HepG2 (cell line): ENCODE measurements at regions of chr3 and their contacts with region 1.

Region 1: GRCh38 chr3:168870872-168871271 is 775.1 kb upstream of the GOLIM4 start:
- DNase-seq: peak; percentile 93
- ATAC-seq: peak; percentile 90
- H3K4me3 ChIP-seq: no peak overlapping the region; a peak in 1 of 6 replicates
- H3K27ac ChIP-seq: peak overlapping the region; percentile 62
- H3K4me1 ChIP-seq: peaks cover 78% of the 10 kb centered on the region
- H3K27me3 ChIP-seq: no peaks in the 10 kb centered on the region
- CTCF ChIP-seq: no peak
- EP300 ChIP-seq: peak; percentile 47 to 92; a peak in 2 of 4 replicates
- POLR2A ChIP-seq: no peak
- RAD21 ChIP-seq: no peak

Region 2: GRCh38 chr3:168859143-168859542 is 11.7 kb before region 1 on chr3:
- CTCF ChIA-PET with region 1: no interaction called
- POLR2A ChIA-PET with region 1: interaction called, 15 read pairs
- in situ Hi-C with region 1: no loop called
- intact Hi-C with region 1: loop called (anchors 1 kb)
- DNase-seq: peak; percentile 91
- ATAC-seq: peak; percentile 97
- H3K4me3 ChIP-seq: no peak overlapping the region
- H3K27ac ChIP-seq: peak overlapping the region; percentile 90
- H3K4me1 ChIP-seq: peaks cover 69% of the 10 kb centered on the region
- H3K27me3 ChIP-seq: no peaks in the 10 kb centered on the region
- CTCF ChIP-seq: no peak
- EP300 ChIP-seq: peak in 1 of 2 experiments; percentile 98; a peak in 2 of 4 replicates
- POLR2A ChIP-seq: no peak
- RAD21 ChIP-seq: no peak

Region 3: GRCh38 chr3:168884353-168884903 is 13.6 kb after region 1 on chr3:
- CTCF ChIA-PET with region 1: no interaction called
- POLR2A ChIA-PET with region 1: no interaction called
- in situ Hi-C with region 1: no loop called
- intact Hi-C with region 1: loop called (anchors 2 kb)
- DNase-seq: no peak
- ATAC-seq: no peak
- H3K4me3 ChIP-seq: no peak overlapping the region
- H3K27ac ChIP-seq: no peak overlapping the region
- H3K4me1 ChIP-seq: peaks cover 20% of the 10 kb centered on the region
- H3K27me3 ChIP-seq: no peaks in the 10 kb centered on the region; a peak in 1 of 5 replicates
- CTCF ChIP-seq: no peak
- EP300 ChIP-seq: no peak
- POLR2A ChIP-seq: no peak
- RAD21 ChIP-seq: no peak

Region 4: DNA sequence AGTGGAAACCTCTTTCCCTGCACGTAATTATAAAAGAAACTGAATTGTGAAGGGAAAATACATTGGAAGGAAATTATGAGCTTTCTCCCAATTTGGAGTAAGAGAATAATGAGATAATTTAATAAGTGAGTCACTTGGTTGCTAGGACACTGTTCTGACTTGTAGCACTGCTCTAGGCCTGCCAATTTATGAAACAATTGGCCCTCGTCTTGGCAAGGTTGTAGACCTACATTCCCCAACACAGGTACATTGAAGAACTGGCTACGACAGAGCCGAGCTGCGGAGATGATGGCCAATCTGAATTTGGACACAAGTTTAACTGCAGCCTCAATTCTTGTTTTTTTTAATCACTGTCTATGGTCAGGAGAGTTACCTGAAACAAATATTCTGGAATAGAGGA is 118.5 kb after region 1 on chr3:
- CTCF ChIA-PET with region 1: no interaction called
- POLR2A ChIA-PET with region 1: no interaction called
- in situ Hi-C with region 1: no loop called
- intact Hi-C with region 1: loop called (anchors 5 kb)
- DNase-seq: no peak
- ATAC-seq: peak; percentile 66
- H3K4me3 ChIP-seq: no peak overlapping the region; a peak in 1 of 6 replicates
- H3K27ac ChIP-seq: peak overlapping the region; percentile 54
- H3K4me1 ChIP-seq: peaks cover 26% of the 10 kb centered on the region
- H3K27me3 ChIP-seq: no peaks in the 10 kb centered on the region
- CTCF ChIP-seq: no peak
- EP300 ChIP-seq: no peak
- POLR2A ChIP-seq: no peak
- RAD21 ChIP-seq: no peak